ENCODE measurements at regions of chr17 and their contacts with region 1.

Region 1: DNA sequence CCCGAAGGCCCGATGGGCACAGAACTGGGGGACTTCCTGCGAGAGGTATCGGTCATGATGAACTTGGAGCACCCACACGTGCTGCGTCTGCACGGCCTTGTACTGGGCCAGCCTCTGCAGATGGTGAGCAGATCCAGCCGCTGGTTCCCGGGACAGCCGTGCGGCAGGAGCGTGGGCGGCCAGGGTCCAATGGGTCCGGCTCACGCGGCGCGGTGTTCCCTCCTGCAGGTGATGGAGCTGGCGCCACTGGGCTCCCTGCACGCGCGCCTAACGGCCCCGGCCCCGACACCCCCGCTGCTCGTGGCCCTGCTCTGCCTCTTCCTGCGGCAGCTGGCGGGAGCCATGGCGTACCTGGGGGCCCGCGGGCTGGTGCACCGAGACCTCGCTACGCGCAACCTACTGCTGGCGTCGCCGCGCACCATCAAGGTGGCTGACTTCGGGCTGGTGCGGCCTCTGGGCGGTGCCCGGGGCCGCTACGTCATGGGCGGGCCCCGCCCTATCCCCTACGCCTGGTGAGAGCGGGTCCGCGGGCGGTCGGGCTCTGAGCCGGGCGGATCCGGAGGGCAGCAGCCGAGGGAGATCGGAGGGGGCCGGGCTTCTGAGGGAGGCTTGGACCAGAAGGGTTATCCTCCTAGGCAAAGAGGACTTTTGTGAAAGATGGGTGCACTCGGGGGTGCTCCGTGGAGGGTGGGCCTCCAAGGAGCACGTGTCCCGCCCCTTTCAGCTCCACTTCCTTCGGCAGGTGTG is 3.0 kb downstream of the TNK1 start:
- DNase-seq: peak; percentile 94
- H3K4me3 Mint-ChIP-seq: peak overlapping the region; percentile 77
- H3K27ac Mint-ChIP-seq: peak overlapping the region; percentile 69
- H3K4me1 Mint-ChIP-seq: peaks cover 4% of the 10 kb centered on the region
- H3K27me3 Mint-ChIP-seq: peaks cover 31% of the 10 kb centered on the region

Region 2: DNA sequence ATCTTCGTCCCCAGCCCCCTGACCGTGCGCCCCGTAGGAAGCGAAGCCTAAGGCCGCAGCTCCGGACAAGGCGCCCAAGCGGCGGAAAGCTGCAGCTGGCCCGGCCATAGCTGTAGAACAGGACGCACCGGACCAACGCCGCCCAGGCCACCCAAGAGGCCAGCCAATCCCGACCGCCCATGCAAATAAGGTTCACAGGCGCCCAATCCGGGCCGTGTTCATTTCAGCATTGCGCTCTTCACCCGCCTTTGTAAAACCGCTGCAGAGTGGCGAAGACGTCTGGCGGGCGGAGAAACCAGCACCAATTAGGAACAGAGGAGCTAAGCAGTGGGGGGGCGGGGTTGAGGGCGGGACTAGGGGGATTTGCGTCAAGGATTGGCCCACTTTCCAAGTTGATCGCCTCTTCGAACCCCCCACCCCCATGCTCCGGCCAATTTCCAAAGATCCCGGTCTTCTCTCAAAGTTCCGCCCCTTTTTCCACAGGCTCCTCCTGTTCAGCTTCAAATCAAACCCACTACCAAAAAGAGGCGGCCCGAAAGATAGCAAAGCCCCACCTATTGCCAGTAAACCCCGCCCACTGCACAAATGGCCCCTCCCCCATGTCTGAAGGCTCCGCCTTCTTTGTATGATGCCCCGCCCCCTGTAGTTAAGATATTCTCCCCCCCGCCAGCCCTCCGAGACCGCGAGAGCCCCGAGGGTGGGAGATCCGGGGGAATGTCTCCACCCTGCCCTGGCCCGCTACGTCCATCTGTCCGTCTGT is 20.2 kb after region 1 on chr17 and contains the start of gene TMEM256:
- intact Hi-C with region 1: loop called (anchors 1 kb)
- DNase-seq: peak; percentile 98
- H3K4me3 Mint-ChIP-seq: peak within 1 kb of the TSS; percentile 96
- H3K27ac Mint-ChIP-seq: peak within 1 kb of the TSS; percentile 96
- H3K4me1 Mint-ChIP-seq: peaks cover 21% of the 10 kb centered on the region
- H3K27me3 Mint-ChIP-seq: peaks cover 23% of the 10 kb centered on the region
- total RNA-seq, gene TMEM256: 47.4 and 59.3 TPM in 2 replicates